Aorta (tissue), 5 donors: ENCODE measurements at regions of chr3 and their contacts with region 1.

Region 1: GRCh38 chr3:119676771-119677640 is at the start of gene COX17:
- DNase-seq: peak; percentile 96 to 97
- ATAC-seq: peak; percentile 95
- H3K4me3 ChIP-seq: peak within 1 kb of the TSS; percentile 79 to 81
- H3K27ac ChIP-seq: peak within 1 kb of the TSS; percentile 61 to 92
- H3K4me1 ChIP-seq: no peaks in the 10 kb centered on the region
- H3K27me3 ChIP-seq: no peaks in the 10 kb centered on the region
- total RNA-seq, gene COX17: 43.6 to 47.3 TPM

Region 2: DNA sequence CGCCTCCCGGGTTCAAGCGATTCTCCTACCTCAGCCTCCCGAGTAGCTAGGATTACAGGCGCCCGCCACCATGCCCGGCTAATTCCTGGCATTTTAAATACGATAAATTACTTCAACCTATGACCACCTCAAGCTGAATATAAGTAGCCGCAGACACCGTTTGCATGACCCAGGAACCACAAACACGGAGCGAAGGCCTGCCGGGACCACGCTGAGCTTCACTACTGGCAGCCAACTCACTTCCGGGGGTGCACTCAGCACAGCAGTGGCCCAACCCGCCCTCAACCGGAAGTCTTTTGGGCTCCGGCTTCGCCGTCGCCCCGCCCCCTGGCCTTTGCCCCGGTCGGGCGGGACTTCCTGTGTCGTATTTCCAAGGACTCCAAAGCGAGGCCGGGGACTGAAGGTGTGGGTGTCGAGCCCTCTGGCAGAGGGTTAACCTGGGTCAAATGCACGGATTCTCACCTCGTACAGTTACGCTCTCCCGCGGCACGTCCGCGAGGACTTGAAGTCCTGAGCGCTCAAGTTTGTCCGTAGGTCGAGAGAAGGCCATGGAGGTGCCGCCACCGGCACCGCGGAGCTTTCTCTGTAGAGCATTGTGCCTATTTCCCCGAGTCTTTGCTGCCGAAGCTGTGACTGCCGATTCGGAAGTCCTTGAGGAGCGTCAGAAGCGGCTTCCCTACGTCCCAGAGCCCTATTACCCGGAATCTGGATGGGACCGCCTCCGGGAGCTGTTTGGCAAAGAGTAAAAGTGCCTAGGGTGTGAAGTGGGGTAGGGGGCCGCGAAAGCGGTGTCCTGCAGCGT is 178.6 kb before region 1 on chr3 and contains the start of gene TIMMDC1:
- intact Hi-C with region 1: loop called in 1 of 2 experiments (anchors 10 kb)
- DNase-seq: peak; percentile 98
- ATAC-seq: peak; percentile 100
- H3K4me3 ChIP-seq: peak within 1 kb of the TSS; percentile 67 to 78
- H3K27ac ChIP-seq: peak within 1 kb of the TSS in 1 of 2 donors; percentile 49
- H3K4me1 ChIP-seq: peaks cover 0 to 4% of the 10 kb centered on the region in 2 donors
- H3K27me3 ChIP-seq: no peaks in the 10 kb centered on the region
- total RNA-seq, gene TIMMDC1: 64.0 to 83.5 TPM

Region 3: DNA sequence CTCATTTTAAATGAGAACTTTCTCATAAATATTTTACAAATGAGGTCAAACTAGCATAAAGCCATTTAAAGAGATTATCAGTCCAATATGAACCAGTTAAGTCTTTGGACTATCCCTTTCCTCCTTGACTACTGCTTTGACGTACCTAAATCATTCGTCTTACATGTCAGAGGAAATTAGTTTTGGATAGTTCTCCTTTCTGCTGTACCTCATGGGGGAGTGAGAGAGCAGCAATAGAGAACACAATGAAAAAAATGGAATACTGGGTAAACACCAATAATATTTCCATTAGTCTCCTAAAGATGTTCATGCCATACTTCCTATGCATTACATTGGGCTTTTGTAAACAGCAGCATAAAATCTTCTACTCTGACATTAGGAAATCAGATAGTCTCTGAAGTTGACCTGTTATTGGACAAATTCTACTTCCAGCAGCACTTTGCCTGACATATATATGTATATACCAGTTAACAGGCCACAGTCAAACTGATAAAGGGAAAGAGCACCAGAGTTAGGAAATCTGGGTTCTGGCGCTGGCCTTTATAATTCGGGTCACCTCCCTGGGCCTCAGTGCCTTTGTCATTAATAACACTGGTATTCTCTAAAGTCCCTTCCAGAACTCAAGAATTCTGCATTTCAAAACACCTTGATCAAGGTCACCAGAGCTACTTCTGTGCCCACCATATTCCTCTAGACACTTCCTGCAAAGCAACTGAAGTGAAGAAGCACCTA is 151.9 kb before region 1 on chr3:
- intact Hi-C with region 1: loop called (anchors 5 to 10 kb)
- DNase-seq: no peak
- ATAC-seq: no peak
- H3K4me3 ChIP-seq: no peak overlapping the region
- H3K27ac ChIP-seq: no peak overlapping the region
- H3K4me1 ChIP-seq: no peaks in the 10 kb centered on the region
- H3K27me3 ChIP-seq: no peaks in the 10 kb centered on the region

Region 4: DNA sequence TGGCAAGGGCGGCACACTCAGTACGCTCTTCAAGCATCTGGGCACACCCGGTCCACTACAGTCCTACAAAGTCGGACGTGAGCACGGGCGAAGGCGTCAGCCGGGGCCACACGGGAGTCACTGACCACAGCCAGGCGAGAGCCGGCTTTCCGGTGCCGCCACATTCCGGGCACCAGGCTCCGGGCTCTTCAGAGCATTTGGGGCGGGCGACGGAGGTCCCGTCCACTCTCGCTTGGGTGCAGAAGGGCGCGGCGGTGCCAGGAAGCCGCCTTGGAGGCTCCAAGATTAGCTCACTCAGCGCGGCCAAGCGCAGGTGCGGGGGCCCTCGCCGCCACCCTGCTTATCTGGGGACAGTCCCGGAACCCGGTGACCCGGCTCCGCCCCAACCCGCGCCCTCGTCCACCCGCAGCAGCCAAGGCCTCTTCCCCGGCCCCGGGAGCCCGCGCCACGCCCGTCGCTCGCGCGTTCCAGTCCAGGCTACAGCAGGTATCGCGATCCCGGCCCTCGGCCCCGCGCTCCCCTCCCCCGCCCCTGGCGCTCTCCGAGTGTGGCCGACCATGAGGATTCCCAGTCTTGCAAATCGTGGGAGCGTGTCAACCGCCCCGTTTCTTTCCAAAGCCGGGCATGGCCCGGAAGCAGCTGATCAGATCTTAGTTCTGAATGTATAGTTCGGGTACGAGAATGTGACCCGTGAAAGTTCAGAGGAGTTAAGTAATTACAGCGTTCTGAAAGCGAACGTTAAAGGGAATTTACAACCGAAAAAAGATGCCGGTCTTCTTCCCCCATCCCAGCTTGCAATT is 97.4 kb before region 1 on chr3 and contains the start of gene ADPRH:
- intact Hi-C with region 1: loop called in 1 of 2 experiments (anchors 1 kb)
- DNase-seq: peak; percentile 85 to 92
- ATAC-seq: peak; percentile 95
- H3K4me3 ChIP-seq: peak within 1 kb of the TSS; percentile 49 to 83
- H3K27ac ChIP-seq: peak within 1 kb of the TSS; percentile 23 to 87
- H3K4me1 ChIP-seq: no peaks in the 10 kb centered on the region
- H3K27me3 ChIP-seq: no peaks in the 10 kb centered on the region
- total RNA-seq, gene ADPRH: 13.6 to 13.9 TPM

Region 5: DNA sequence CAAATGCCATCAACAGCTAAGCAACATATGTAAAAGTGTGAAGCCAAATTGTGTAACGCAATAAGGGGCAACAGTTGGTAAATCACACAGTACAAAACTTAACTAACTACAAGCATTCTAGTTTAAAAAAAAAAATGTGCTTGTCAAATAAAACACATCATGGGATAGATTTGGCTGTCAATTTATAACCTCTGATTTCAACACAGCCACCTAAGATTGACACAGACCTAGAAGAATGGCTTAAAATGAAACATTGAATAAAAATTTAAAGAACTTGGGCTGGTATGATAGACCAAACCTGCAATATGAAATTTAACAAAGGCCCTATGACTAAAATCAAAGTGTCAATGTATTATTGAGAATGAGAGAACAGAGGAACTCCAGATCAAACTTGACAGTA is 253.3 kb after region 1 on chr3:
- intact Hi-C with region 1: no loop called
- DNase-seq: no peak
- ATAC-seq: no peak
- H3K4me3 ChIP-seq: no peak overlapping the region
- H3K27ac ChIP-seq: no peak overlapping the region
- H3K4me1 ChIP-seq: no peaks in the 10 kb centered on the region
- H3K27me3 ChIP-seq: no peaks in the 10 kb centered on the region